Activated CD4-positive, alpha-beta T cell treated with anti-CD3 and anti-CD28 coated beads for 36 hours (primary cell): ENCODE measurements at regions of chr16 and their contacts with region 1.

Region 1: DNA sequence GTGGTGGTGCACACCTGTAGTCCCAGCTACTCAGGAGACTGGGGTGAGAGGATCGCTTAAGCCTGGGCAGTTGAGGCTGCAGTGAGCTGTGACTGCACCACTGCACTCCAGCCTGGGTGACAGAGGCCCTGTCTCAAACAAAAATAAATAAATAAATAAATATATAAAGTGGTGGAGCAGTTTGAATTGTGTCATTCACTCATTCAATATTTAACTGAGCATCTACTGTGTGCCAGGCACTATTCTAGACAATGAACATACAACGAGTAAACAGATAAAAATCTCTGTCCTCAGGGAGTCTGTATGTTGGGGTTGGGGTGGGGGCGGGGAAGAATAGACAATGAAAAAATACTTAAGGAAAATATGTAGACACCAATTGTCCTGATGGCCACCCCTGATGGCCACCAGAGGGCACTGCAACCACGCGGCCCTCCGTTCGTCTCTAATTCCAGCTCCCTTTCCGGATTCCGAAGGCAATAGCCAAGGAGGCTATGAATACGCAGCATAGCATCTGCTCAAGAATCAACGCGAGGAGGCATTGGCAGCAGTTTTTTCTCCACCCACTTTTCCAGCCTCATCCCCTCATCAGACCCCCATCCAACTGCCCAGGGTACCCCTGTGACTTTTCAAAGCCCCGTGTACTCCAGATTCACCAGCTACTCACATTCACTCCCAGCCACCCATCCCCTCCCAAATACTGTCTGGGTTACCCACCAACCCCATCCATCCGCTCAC is 21.4 kb downstream of the QPRT start:
- DNase-seq: peak; percentile 88
- ATAC-seq: peak; percentile 45
- H3K4me3 Mint-ChIP-seq: peak overlapping the region; percentile 44
- H3K27ac Mint-ChIP-seq: peak overlapping the region; percentile 67
- H3K4me1 Mint-ChIP-seq: peaks cover 32% of the 10 kb centered on the region
- H3K27me3 Mint-ChIP-seq: no peaks in the 10 kb centered on the region

Region 2: DNA sequence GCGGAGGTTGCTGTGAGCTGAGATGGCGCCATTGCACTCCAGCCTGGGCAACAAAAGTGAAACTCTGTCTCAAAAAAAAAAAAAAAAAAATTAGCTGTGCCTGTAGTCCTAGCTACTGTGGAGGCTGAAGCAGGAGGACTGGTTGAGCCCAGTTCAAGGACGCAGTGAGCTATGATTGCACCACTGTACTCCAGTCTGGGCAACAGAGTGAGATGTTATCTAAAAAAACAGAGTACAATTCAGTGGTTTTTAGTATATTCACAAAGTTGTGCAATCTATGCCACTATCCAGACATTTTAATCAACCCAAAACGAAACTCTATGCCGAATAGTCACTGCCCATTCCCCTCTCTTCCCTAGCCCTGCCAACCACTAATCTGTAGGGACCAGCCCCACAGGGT is 20.3 kb after region 1 on chr16:
- CTCF ChIA-PET with region 1: interaction called, 24 read pairs
- POLR2A ChIA-PET with region 1: interaction called, 6 read pairs
- intact Hi-C with region 1: no loop called
- DNase-seq: no peak
- ATAC-seq: no peak
- H3K4me3 Mint-ChIP-seq: no peak overlapping the region
- H3K27ac Mint-ChIP-seq: no peak overlapping the region
- H3K4me1 Mint-ChIP-seq: peaks cover 20% of the 10 kb centered on the region
- H3K27me3 Mint-ChIP-seq: no peaks in the 10 kb centered on the region

Region 3: DNA sequence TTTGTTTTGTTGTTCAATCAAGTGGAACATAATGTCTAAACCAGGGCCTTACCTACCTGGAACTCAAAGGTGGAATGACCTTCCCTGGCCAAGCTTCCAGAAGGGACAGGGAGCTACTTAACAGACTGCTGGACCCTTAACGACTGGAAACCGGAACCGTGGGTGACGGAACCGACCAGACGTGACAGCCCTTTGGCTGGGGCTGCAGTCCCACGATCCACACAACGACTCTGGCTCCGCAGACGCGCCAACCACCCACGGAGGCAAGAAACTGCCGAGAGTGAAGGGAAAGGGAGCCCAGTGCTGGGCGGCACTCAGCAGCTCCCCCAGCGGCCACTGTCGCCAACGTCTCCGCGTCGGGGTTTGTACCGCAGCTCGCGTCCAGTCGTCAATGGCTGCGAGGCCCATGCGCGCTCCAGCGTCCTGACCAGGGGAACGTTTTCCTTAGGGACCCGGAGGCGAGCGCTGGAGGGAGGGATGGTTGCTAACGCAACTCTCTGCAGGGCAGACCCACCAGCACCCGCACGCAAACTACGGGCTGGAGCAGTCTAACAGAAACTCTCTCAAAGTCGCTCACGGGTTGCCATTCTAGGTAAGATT is 84.6 kb after region 1 on chr16:
- CTCF ChIA-PET with region 1: interaction called, 25 read pairs
- POLR2A ChIA-PET with region 1: interaction called, 12 read pairs
- intact Hi-C with region 1: loop called (anchors 1 kb)
- DNase-seq: peak; percentile 89
- ATAC-seq: peak; percentile 79
- H3K4me3 Mint-ChIP-seq: peak overlapping the region; percentile 51
- H3K27ac Mint-ChIP-seq: no peak overlapping the region
- H3K4me1 Mint-ChIP-seq: peaks cover 29% of the 10 kb centered on the region
- H3K27me3 Mint-ChIP-seq: no peaks in the 10 kb centered on the region

Region 4: GRCh38 chr16:29815793-29816693 is 115.6 kb after region 1 on chr16 and contains the start of gene PAGR1:
- CTCF ChIA-PET with region 1: interaction called, 17 read pairs
- POLR2A ChIA-PET with region 1: no interaction called
- intact Hi-C with region 1: loop called (anchors 1 to 2 kb)
- DNase-seq: peak; percentile 99
- ATAC-seq: peak; percentile 72
- H3K4me3 Mint-ChIP-seq: peak within 1 kb of the TSS; percentile 84
- H3K27ac Mint-ChIP-seq: peak within 1 kb of the TSS; percentile 97
- H3K4me1 Mint-ChIP-seq: peaks cover 57% of the 10 kb centered on the region
- H3K27me3 Mint-ChIP-seq: no peaks in the 10 kb centered on the region
- total RNA-seq, gene PAGR1: 20.6 to 25.6 TPM

Region 5: DNA sequence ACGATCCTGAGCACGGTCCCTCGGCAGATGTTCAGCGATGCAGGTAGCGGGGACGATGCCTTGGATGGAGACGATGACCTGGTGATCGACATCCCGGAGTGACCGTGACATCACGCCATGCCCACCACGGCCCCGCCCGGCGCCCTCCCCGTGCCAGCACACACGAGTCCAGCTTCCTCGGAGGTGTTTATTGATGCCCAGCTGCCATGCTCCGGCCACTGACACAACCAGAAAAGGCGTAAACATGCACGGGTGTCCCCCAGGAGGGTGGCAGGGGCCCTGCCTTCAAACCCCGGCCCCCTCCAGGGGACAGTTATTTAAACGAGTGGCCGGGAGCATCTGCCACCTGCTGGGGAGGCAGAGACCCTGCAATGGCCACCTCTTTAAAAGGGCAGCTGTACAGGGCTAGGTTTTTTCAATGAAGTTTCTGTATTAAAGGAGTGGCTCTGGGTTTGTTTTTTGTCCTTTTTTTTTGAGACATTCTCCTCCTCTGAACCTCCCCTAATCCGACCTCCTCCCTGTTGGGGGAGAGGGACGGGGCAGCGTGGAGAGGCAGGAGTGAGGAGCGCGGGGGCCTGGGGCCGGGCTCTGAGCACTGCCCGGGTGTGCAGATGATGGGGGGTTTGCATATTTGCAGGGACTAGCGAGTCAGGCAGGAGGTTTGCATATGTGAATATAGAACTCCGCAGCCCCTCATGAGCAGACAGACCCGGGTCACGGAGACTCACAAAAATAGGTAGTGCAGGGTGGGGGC is 305.1 kb after region 1 on chr16:
- CTCF ChIA-PET with region 1: interaction called, 12 read pairs
- POLR2A ChIA-PET with region 1: no interaction called
- intact Hi-C with region 1: no loop called
- DNase-seq: peak; percentile 65
- ATAC-seq: peak; percentile 73
- H3K4me3 Mint-ChIP-seq: no peak overlapping the region
- H3K27ac Mint-ChIP-seq: no peak overlapping the region
- H3K4me1 Mint-ChIP-seq: peaks cover 6% of the 10 kb centered on the region
- H3K27me3 Mint-ChIP-seq: peaks cover 10% of the 10 kb centered on the region